PC-3 (cell line): ENCODE measurements at regions of chr17 and their contacts with region 1.

Region 1: GRCh38 chr17:73888862-73889261 is 244.6 kb upstream of the SDK2 start:
- DNase-seq: no peak
- ATAC-seq: no peak
- H3K4me3 ChIP-seq: no peak overlapping the region
- H3K27ac ChIP-seq: no peak overlapping the region
- H3K4me1 ChIP-seq: no peaks in the 10 kb centered on the region
- H3K27me3 ChIP-seq: peaks cover 12% of the 10 kb centered on the region
- CTCF ChIP-seq: no peak

Region 2: GRCh38 chr17:73759734-73760438 is 129.0 kb before region 1 on chr17:
- CTCF ChIA-PET with region 1: no interaction called
- POLR2A ChIA-PET with region 1: no interaction called
- intact Hi-C with region 1: no loop called
- DNase-seq: no peak
- ATAC-seq: no peak
- H3K4me3 ChIP-seq: no peak overlapping the region
- H3K27ac ChIP-seq: no peak overlapping the region
- H3K4me1 ChIP-seq: no peaks in the 10 kb centered on the region
- H3K27me3 ChIP-seq: peaks cover 75% of the 10 kb centered on the region
- CTCF ChIP-seq: no peak

Region 3: DNA sequence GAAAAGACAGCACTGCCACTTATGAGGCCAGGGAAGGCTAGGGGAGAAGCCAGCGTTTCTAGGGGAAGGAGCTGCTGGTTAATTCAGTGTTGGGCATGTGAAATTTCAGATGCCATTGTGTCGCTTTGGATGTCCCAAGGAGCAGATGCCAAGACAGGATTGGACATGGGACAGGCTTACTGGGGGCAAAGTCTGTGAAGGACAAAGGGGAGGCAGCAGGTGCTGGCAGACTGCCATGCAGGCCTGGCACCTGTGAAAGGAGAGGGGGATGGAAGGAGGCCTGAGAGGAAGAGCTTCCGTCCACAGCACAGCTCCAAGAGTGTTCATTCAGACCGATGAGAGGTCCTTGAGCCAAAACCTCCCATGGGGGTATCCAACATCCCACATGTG is 59.1 kb after region 1 on chr17:
- CTCF ChIA-PET with region 1: no interaction called
- POLR2A ChIA-PET with region 1: no interaction called
- intact Hi-C with region 1: loop called (anchors 2 kb)
- DNase-seq: no peak
- ATAC-seq: no peak
- H3K4me3 ChIP-seq: no peak overlapping the region
- H3K27ac ChIP-seq: no peak overlapping the region
- H3K4me1 ChIP-seq: no peaks in the 10 kb centered on the region
- H3K27me3 ChIP-seq: peaks cover 34% of the 10 kb centered on the region; the same call in 1 of the 2 replicates
- CTCF ChIP-seq: no peak